Activated naive CD8-positive, alpha-beta T cell treated with anti-CD3 and anti-CD28 coated beads, Interleukin-2, amount 10 ng/mL, durations not matched to agents 7 days and 5 days (primary cell): ENCODE measurements at regions of chr12 and their contacts with region 1.

Region 1: DNA sequence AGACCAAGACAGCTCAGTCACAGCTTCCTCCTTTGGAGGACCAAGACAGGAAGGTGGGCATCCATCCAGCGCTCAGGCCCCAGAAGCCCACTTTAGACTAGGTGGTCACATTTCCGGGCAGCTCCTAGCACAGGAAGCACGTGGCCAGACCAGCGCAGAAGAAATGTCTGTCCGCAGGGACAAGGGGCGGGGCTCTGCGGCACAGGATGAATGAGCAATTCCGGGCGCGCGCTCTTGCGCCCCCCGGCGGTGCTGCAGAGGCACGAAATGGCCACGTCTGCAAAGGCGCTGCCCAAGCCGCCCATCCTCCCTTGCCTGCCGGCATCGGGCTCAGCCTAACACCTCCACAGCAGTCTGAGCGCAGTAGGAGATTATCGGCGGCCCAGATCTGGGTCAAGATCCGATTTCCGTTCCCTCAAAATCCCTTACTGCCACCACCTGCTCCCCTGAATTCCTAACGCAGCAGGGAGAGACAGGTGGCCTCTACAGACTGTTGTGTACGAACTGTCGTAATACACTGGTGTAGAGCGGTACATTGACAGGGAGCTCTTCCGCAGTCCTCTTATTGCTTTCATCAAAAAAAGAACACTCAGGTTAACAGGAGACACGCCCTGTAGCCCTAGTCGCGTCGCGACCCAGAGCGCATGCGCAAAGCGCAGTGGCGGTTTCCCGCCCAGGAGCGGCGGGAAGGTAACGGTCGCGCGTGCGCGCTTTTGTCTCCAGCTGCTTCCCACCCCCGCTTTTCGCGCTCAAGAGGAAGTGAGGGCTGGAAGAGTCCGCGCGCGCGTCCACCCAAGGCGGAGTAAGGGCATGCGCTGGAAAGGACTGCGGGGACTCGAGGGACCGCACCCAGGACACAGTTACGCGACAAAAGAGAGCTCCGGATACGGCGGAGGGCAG is 794 bp downstream of the TUBA1B start:
- DNase-seq: peak; percentile 95
- ATAC-seq: peak; percentile 53
- H3K4me3 Mint-ChIP-seq: peak overlapping the region; percentile 95
- H3K27ac Mint-ChIP-seq: peak overlapping the region; percentile 98
- H3K4me1 Mint-ChIP-seq: peaks cover 51% of the 10 kb centered on the region
- H3K27me3 Mint-ChIP-seq: no peaks in the 10 kb centered on the region

Region 2: DNA sequence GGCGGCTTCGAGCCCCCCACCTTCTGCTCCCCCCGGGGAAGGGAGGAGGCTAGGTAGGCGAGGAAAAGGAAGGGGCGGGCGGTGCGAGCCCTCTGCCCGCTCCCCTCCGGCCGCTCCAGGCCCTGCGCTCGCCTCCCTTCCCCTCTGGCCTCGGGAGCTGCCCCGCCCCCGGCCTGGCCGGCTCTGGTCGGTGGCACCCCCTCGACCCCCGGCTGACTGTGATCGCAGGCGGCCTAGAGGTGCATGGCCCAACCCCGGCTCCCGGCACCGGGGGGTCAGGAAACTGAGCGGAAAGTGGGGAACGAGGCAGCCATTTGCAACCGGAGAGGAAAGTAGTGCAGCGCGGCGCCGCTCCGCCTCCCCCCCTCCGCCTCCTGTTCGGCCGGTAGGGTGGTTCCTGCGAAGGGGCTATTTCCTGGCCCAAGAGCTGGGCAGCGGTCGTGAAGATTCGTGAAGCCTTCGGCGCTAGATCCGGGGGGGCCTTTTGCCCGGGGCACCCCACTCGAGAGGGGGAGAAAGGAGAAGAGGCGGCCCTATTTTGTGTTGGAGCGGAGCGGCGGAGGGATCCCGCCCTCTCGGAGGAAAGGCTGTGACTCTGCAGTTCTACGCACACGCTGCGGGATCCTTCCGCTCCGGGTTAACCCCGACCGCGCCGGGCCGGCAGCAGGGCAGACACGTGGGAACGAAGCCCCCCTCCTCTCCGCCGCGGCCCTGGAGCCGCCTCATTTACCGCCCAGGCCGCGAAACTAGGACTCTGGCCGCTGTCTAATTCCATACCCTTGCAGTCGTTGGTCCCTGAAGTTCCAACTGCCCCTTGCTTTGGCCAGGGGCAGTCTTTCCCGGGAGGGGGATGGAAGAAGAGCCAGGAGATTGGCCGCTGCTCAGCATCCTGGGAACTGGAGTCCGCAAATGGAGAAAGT is 69.9 kb before region 1 on chr12 and contains the start of gene KMT2D:
- POLR2A ChIA-PET with region 1: interaction called, 24 read pairs
- DNase-seq: peak; percentile 91
- ATAC-seq: peak; percentile 72
- H3K4me3 Mint-ChIP-seq: peak within 1 kb of the TSS; percentile 95
- H3K27ac Mint-ChIP-seq: peak within 1 kb of the TSS; percentile 92
- H3K4me1 Mint-ChIP-seq: peaks cover 43% of the 10 kb centered on the region
- H3K27me3 Mint-ChIP-seq: no peaks in the 10 kb centered on the region
- total RNA-seq, gene KMT2D: 123 to 129 TPM

Region 3: DNA sequence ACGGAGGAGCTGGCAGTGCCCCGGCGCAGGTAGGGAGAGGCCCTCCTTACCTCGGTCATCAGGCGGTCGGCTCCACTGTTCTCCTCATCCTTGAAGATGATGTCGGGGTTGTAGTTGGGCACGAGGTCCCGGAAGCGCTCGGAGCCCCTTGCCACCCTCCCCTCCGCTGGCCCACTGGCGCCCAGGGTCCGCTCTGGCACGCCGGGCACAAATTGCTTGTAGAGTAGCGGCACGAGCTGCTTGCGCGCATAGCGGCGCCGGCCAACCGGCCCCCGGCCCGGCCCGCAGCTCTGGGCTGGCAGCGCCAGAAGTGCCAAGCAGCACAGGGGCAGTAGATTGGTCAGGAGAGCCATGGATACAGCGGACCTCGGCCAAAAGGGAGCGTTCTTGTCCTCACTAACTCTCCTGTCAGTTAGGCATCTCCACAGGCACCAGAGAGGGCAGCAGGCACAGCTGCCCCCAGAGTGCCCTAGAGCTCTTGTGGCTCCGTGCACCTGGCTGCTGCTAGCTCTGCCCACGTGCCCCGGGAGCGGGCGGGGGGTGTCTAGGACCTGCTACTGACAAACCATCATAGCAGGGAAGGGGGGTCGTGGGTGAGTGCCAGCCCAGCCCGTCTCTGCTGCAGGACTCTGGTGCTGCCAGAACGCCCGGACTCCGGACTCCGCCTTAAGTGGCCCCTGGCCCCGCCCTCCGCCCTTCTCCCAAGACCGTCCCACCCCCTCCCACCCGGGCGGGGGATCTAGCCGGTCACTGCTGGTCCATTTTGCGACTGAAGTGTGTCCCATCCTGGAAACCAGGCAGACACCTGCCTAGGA is 36.0 kb before region 1 on chr12 and contains the start of gene DHH:
- POLR2A ChIA-PET with region 1: interaction called, 14 read pairs
- DNase-seq: peak; percentile 38
- ATAC-seq: no peak
- H3K4me3 Mint-ChIP-seq: peak within 1 kb of the TSS; percentile 52
- H3K27ac Mint-ChIP-seq: no peak within 1 kb of the TSS
- H3K4me1 Mint-ChIP-seq: peaks cover 30% of the 10 kb centered on the region
- H3K27me3 Mint-ChIP-seq: peaks cover 51% of the 10 kb centered on the region
- total RNA-seq, gene DHH: 0.11 to 0.25 TPM

Region 4: GRCh38 chr12:49146406-49146805 is 16.0 kb after region 1 on chr12:
- POLR2A ChIA-PET with region 1: interaction called, 28 read pairs
- DNase-seq: no peak
- ATAC-seq: no peak
- H3K4me3 Mint-ChIP-seq: no peak overlapping the region
- H3K27ac Mint-ChIP-seq: no peak overlapping the region
- H3K4me1 Mint-ChIP-seq: peaks cover 5% of the 10 kb centered on the region
- H3K27me3 Mint-ChIP-seq: no peaks in the 10 kb centered on the region

Region 5: GRCh38 chr12:49232940-49233841 is 102.8 kb after region 1 on chr12:
- POLR2A ChIA-PET with region 1: interaction called, 53 read pairs
- DNase-seq: no peak
- ATAC-seq: no peak
- H3K4me3 Mint-ChIP-seq: no peak overlapping the region
- H3K27ac Mint-ChIP-seq: peak overlapping the region; percentile 66
- H3K4me1 Mint-ChIP-seq: peaks cover 6% of the 10 kb centered on the region
- H3K27me3 Mint-ChIP-seq: peaks cover 4% of the 10 kb centered on the region

Region 6: DNA sequence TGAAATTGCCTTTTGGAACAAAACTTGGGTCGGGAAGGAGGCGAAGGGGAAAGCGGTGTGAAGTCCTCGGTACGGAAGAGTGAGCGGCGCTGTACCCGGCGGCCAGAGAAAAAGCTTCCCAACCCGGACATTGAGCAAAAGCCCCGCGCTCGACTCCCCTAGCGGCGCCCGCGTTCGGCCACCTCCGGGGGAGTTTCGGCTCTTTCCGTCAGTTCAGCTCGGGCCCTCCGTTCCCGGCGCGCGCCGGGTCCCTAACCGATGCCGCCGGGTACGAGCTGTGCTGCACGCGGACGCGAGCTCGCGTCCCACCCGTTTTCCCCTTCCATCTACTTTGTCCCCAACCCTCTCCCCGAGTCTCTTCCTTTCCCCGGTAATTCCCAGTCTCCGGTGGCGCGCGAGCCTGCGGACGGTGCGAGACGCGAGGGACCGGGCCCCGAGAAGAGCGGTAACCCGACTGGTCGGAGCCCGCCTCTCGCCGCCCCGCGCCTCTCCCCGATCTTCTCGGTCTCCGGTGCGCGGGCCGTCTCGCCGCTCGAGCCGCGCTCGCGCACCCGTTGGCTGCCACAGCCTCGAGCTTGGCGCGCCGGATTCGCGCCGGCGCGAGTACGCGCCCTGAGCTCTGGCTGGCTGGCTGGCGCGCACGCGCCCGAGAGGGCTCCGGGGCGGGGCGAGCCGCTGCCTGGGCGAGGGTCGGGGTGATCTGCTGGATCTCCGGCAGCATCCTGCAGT is 236.4 kb after region 1 on chr12:
- POLR2A ChIA-PET with region 1: interaction called, 14 read pairs
- DNase-seq: peak; percentile 92
- ATAC-seq: peak; percentile 83
- H3K4me3 Mint-ChIP-seq: peak overlapping the region; percentile 90
- H3K27ac Mint-ChIP-seq: peak overlapping the region; percentile 97
- H3K4me1 Mint-ChIP-seq: peaks cover 26% of the 10 kb centered on the region
- H3K27me3 Mint-ChIP-seq: peaks cover 2% of the 10 kb centered on the region